Sigmoid colon (tissue), 7 donors: ENCODE measurements at regions of chr2 and their contacts with region 1.

Region 1: GRCh38 chr2:76599732-76600368 is 889.1 kb upstream of the GCFC2 start:
- DNase-seq: no peak
- H3K4me3 ChIP-seq: no peak overlapping the region
- H3K27ac ChIP-seq: no peak overlapping the region
- H3K4me1 ChIP-seq: no peaks in the 10 kb centered on the region
- H3K27me3 ChIP-seq: no peaks in the 10 kb centered on the region
- CTCF ChIP-seq: peak; percentile 16 to 51 (median 36)
- EP300 ChIP-seq: no peak
- POLR2A ChIP-seq: no peak

Region 2: DNA sequence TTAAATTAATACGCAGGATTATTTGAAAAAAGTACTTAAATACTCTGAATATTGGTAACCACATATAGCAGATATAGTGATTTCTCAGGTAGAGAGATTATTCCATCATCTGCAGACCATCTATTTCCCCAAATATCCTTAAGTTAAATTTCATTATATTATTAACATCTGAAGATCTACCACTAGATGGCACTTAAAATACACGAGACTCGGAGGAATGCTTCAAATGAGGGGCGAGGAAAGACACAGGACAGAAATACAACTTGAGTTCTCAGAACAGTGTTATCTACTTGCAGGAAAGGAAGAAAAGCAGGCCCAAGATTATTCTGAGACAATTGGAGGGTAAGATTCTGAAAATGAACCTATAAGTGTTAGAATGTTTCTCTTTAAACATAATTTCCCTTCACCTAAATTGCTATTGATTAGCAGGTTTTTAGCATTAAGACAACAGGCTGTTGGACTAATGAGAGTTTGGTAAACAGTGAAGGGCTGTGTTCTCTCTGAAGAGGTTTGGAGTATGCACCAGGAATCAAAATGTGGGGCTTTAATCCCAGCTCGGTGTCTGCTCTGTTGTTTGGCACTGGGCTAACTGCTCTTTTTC is 812.2 kb before region 1 on chr2:
- intact Hi-C with region 1: loop called (anchors 5 kb)
- DNase-seq: no peak
- H3K4me3 ChIP-seq: no peak overlapping the region
- H3K27ac ChIP-seq: no peak overlapping the region
- H3K4me1 ChIP-seq: no peaks in the 10 kb centered on the region
- H3K27me3 ChIP-seq: no peaks in the 10 kb centered on the region
- CTCF ChIP-seq: peak in 2 of 4 experiments; percentile 10 to 21
- EP300 ChIP-seq: no peak
- POLR2A ChIP-seq: no peak

Region 3: DNA sequence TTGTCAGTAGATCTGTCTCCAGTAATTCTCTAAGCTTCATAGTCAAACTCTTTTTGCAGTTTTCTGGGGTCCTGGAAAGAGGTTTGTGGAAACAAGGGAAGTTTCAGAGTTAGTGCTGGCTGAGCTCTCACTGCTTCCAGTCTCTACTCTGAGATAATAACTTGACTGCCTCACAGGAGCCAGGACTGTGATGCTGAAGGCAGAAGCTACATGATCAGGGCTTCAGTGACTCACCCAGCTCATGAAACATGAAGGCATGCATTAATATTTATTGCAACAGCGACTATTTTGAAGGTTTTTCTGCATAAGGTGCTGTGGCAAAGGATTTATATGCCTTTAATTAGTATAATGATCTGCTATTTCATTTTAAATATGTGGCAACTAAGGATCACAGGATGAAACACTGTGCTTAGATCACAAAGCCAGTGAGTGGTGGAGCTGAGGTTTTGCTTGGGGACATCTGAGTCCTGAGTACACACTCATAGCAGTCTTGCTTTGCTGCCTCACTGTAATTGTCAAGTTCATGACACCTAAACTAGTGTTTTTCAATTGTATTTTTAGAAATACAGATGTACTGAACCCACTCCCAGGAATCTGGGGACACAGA is 440.7 kb before region 1 on chr2:
- intact Hi-C with region 1: no loop called
- DNase-seq: no peak
- H3K4me3 ChIP-seq: no peak overlapping the region
- H3K27ac ChIP-seq: no peak overlapping the region
- H3K4me1 ChIP-seq: no peaks in the 10 kb centered on the region
- H3K27me3 ChIP-seq: no peaks in the 10 kb centered on the region
- CTCF ChIP-seq: no peak
- EP300 ChIP-seq: no peak
- POLR2A ChIP-seq: no peak

Region 4: GRCh38 chr2:76491503-76491902 is 108.3 kb before region 1 on chr2:
- intact Hi-C with region 1: no loop called
- DNase-seq: no peak
- H3K4me3 ChIP-seq: no peak overlapping the region
- H3K27ac ChIP-seq: no peak overlapping the region
- H3K4me1 ChIP-seq: no peaks in the 10 kb centered on the region
- H3K27me3 ChIP-seq: no peaks in the 10 kb centered on the region
- CTCF ChIP-seq: no peak
- EP300 ChIP-seq: no peak
- POLR2A ChIP-seq: no peak

Region 5: GRCh38 chr2:76640905-76641304 is 41.1 kb after region 1 on chr2:
- intact Hi-C with region 1: no loop called
- DNase-seq: no peak
- H3K4me3 ChIP-seq: no peak overlapping the region
- H3K27ac ChIP-seq: no peak overlapping the region
- H3K4me1 ChIP-seq: peaks cover 0 to 15% (median 0%) of the 10 kb centered on the region in 4 donors
- H3K27me3 ChIP-seq: no peaks in the 10 kb centered on the region
- CTCF ChIP-seq: no peak
- EP300 ChIP-seq: no peak
- POLR2A ChIP-seq: no peak

Region 6: DNA sequence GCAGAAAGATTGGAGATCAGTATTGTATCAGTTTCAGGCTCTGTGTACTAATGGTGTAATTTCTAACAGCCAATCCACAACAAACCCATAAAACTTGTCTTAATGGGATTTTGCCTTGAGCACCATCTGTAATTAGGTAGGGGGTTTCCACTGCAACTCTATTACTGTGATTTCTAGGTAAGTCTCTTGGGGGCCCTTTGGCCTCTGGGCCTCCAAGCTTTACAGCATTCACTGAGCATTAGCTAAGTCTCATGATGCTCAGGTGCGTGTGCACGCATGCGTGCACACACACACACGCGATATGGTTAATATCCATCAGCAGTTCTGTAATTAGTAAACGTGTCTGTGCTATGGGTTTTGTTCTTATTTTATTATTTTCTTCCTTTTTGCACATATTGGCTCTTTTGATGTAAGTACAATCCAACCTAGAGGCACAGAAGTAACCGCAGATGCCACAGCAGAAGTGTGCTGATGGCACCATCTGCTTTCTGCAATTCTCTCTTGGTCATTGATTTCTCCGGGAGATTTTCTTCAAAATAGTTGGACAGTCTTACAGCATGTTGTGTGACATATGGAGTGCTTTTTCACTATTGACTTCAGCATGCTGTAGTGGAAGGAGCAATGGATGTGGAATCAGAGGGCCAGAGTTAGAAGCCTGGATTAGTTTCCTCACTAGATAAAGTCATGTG is 330.4 kb after region 1 on chr2:
- intact Hi-C with region 1: no loop called
- DNase-seq: no peak
- H3K4me3 ChIP-seq: no peak overlapping the region
- H3K27ac ChIP-seq: no peak overlapping the region
- H3K4me1 ChIP-seq: no peaks in the 10 kb centered on the region
- H3K27me3 ChIP-seq: no peaks in the 10 kb centered on the region
- CTCF ChIP-seq: no peak
- EP300 ChIP-seq: no peak
- POLR2A ChIP-seq: no peak